ENCODE measurements at regions of chr13 and their contacts with region 1.

Region 1: DNA sequence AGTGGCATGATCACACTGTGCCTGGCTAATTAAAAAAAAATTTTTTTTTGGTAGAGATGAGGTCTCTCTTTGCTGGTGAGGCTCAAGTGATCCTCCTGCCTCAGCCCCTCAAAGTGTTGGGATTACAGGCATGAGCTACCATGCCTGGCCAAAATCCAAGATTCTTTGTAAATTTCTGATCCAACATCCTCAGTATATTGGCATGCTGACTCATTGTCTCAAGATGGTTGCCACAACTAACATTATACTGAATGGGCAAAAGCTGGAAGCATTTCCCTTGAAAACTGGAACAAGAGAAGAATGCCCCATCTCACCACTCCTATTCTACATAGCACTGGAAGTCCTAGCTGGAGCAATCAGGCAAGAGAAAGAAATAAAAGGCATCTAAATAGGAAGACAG is 100.0 kb downstream of the KLF5 start:
- DNase-seq: no peak
- H3K4me3 ChIP-seq: no peak overlapping the region
- H3K27ac ChIP-seq: no peak overlapping the region
- H3K4me1 ChIP-seq: no peaks in the 10 kb centered on the region
- H3K27me3 ChIP-seq: no peaks in the 10 kb centered on the region
- CTCF ChIP-seq: no peak
- POLR2A ChIP-seq: no peak

Region 2: DNA sequence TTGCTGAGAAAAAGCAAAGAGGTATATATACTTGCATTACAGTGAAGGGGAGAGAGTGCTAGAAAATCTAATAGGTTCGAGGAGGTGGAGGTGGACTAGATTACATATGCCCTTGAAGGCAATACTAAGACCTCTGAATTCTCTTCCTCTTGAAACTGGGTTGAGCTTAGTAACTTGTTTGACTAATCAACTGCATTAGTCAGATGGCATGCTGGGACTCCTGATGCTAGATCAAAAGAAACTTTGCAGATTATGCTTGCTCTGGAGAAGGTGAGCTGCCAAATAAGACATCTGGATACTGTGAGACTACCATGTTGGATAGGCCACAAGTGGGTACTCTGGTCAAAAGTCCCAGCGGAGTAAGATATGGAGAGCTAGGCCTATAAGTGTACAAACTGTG is 231.2 kb after region 1 on chr13:
- intact Hi-C with region 1: no loop called
- DNase-seq: no peak
- H3K4me3 ChIP-seq: no peak overlapping the region
- H3K27ac ChIP-seq: no peak overlapping the region
- H3K4me1 ChIP-seq: no peaks in the 10 kb centered on the region
- H3K27me3 ChIP-seq: no peaks in the 10 kb centered on the region
- CTCF ChIP-seq: no peak
- POLR2A ChIP-seq: no peak

Region 3: GRCh38 chr13:73598021-73598712 is 439.3 kb after region 1 on chr13:
- intact Hi-C with region 1: no loop called
- DNase-seq: no peak
- H3K4me3 ChIP-seq: no peak overlapping the region
- H3K27ac ChIP-seq: no peak overlapping the region
- H3K4me1 ChIP-seq: no peaks in the 10 kb centered on the region
- H3K27me3 ChIP-seq: no peaks in the 10 kb centered on the region
- CTCF ChIP-seq: no peak
- POLR2A ChIP-seq: no peak

Region 4: DNA sequence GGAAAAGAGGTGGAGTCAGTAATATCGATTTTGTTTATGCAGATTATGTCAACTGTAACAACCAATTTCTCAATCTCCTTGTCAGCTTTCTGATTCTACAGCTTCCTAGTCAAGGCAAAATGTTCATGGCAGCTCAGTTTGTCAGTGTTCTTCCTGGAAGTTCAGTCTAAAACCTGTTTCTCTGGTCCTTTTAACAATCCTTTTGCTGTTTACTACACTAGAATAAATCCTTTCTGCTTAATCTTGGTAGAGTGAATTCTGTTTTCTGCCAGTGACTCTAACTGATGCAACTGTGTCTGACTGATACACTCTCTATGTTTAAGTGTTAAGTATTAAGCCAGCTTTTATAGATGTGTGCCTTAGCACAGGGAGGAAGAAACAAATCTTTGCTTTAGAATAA is 1492.3 kb after region 1 on chr13:
- intact Hi-C with region 1: loop called (anchors 10 kb)
- DNase-seq: no peak
- H3K4me3 ChIP-seq: no peak overlapping the region
- H3K27ac ChIP-seq: no peak overlapping the region
- H3K4me1 ChIP-seq: no peaks in the 10 kb centered on the region
- H3K27me3 ChIP-seq: no peaks in the 10 kb centered on the region
- CTCF ChIP-seq: no peak
- POLR2A ChIP-seq: no peak